ENCODE measurements at regions of chr7 and their contacts with region 1.

Region 1: DNA sequence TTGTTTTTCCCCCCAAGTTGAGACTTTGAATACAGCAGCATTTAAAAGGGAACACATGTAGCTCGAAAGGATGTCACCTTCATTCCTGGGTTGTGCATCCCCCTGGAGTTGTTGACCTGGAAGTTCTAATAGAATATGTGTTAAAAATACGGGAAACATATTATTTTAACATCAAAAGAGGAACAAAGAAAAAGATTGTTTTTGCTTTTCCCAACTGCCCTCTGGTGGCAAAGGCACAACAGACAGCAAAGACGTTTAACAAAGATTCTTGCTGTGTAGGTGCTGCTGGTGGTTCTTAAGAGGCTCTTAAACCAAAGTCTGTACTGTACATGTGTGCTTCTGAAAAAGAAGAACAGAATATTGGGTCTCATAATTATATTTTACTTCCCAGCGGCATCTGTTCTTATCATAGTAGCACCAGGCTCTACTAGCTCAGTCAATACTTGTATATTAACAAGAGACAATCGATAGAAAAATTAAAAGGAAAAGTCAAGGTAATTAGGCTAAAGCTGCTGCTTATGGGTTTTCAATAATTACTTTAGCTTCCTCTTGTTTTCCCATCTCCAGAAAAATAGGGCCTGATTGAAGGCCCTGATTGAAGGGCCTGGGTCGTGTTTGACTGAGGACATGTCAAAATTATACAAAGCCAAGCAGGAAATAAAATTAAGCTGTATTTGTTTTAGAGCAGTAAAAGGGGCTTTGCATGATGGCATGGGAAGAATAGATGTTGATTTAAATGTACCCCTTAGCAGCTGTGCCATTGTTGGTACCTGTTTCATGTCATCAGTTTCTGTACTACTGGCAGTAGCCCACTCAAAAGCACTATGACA is 384.2 kb upstream of the LRGUK start:
- DNase-seq: peak; percentile 16
- H3K4me3 ChIP-seq: no peak overlapping the region
- H3K27ac ChIP-seq: no peak overlapping the region
- H3K4me1 ChIP-seq: peaks cover 14% of the 10 kb centered on the region
- H3K27me3 ChIP-seq: no peaks in the 10 kb centered on the region
- CTCF ChIP-seq: peak; percentile 53 to 63

Region 2: DNA sequence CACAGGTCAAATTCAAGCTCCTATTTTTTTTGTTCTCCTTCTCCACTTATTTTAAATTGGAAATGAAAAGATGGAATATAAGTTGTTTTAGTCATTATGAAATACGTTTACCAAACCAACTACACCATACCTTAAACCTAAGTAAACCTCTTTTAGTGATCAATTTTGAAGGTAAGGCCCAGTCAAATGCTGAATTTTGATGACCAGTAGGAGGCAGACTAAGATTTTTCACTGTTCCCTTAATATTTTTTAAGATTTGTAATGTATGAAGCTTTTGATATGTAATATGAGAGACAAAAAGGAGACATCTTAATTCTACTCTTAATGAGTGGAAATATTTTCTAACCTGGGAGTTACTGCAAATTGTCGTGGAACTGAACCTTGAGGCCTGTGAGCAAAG is 178.4 kb before region 1 on chr7:
- CTCF ChIA-PET with region 1: no interaction called
- dilution Hi-C with region 1: no loop called
- in situ Hi-C with region 1: no loop called
- intact Hi-C with region 1: loop called (anchors 10 kb)
- DNase-seq: no peak
- H3K4me3 ChIP-seq: no peak overlapping the region
- H3K27ac ChIP-seq: no peak overlapping the region
- H3K4me1 ChIP-seq: peaks cover 3% of the 10 kb centered on the region
- H3K27me3 ChIP-seq: no peaks in the 10 kb centered on the region
- CTCF ChIP-seq: peak; percentile 10 to 35

Region 3: DNA sequence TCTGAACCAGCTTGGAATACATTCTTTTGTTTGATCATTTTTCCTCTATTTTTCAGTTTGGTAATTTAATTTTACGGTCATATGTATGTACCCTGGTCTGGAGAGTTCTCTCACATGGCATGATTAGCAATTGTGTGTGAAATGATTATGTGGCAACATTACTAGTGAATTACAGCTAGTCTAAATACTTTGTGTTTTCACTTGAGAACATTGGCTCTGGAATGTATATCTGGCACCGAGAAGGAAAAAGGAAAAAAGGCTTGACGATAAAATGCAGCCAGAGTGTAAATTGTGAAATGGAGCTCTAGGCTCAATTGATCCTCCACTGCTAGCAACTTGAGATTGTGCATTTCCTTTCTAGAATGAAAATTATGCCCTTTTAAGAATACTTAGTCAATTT is 92.9 kb before region 1 on chr7:
- CTCF ChIA-PET with region 1: no interaction called
- dilution Hi-C with region 1: no loop called
- in situ Hi-C with region 1: no loop called
- intact Hi-C with region 1: no loop called
- DNase-seq: no peak
- H3K4me3 ChIP-seq: no peak overlapping the region
- H3K27ac ChIP-seq: peak overlapping the region; percentile 7
- H3K4me1 ChIP-seq: no peaks in the 10 kb centered on the region
- H3K27me3 ChIP-seq: no peaks in the 10 kb centered on the region
- CTCF ChIP-seq: no peak

Region 4: DNA sequence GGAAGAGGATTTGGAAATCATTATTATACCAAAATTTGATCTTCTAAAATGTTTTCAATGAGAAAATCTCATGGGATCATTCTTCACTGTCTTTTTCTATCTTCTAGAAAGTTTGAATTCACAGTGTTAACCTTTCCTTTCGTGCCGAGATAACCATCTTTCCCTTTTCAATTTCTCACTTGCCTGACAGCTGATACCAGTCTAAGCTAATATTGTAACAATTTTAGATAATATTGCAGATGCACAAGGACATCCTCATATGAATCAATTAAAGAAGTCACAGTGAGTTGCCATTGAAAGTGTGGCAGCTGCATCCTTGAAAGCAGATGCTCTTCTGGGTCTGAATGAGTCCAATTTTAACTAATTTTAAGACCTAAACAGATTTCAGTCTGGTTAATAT is 244.7 kb after region 1 on chr7:
- CTCF ChIA-PET with region 1: no interaction called
- dilution Hi-C with region 1: no loop called
- in situ Hi-C with region 1: no loop called
- intact Hi-C with region 1: loop called (anchors 5 kb)
- DNase-seq: no peak
- H3K4me3 ChIP-seq: no peak overlapping the region
- H3K27ac ChIP-seq: no peak overlapping the region
- H3K4me1 ChIP-seq: peaks cover 16% of the 10 kb centered on the region
- H3K27me3 ChIP-seq: no peaks in the 10 kb centered on the region
- CTCF ChIP-seq: no peak

Region 5: GRCh38 chr7:134016223-134016941 is 273.5 kb after region 1 on chr7:
- CTCF ChIA-PET with region 1: no interaction called
- dilution Hi-C with region 1: no loop called
- in situ Hi-C with region 1: no loop called
- intact Hi-C with region 1: loop called (anchors 1 kb)
- DNase-seq: peak; percentile 11
- H3K4me3 ChIP-seq: no peak overlapping the region
- H3K27ac ChIP-seq: no peak overlapping the region
- H3K4me1 ChIP-seq: no peaks in the 10 kb centered on the region
- H3K27me3 ChIP-seq: no peaks in the 10 kb centered on the region
- CTCF ChIP-seq: peak; percentile 67 to 78